Left lung (tissue), 14 donors: ENCODE measurements at regions of chr7 and their contacts with region 1.

Region 1: GRCh38 chr7:26490650-26491624 is 199.3 kb downstream of the SNX10 start:
- DNase-seq: peak in 1 of 4 donors; percentile 40
- ATAC-seq: no peak
- H3K4me3 ChIP-seq: no peak overlapping the region
- H3K27ac ChIP-seq: no peak overlapping the region
- H3K4me1 ChIP-seq: no peaks in the 10 kb centered on the region
- H3K27me3 ChIP-seq: no peaks in the 10 kb centered on the region
- CTCF ChIP-seq: no peak

Region 2: GRCh38 chr7:26388256-26388655 is 102.7 kb before region 1 on chr7:
- intact Hi-C with region 1: loop called in 1 of 2 experiments (anchors 10 kb)
- DNase-seq: no peak
- ATAC-seq: no peak
- H3K4me3 ChIP-seq: no peak overlapping the region
- H3K27ac ChIP-seq: no peak overlapping the region
- H3K4me1 ChIP-seq: peaks cover 0 to 11% of the 10 kb centered on the region in 2 donors
- H3K27me3 ChIP-seq: peaks cover 17 to 43% of the 10 kb centered on the region in 2 donors
- CTCF ChIP-seq: no peak